Panc1 (cell line): ENCODE measurements at regions of chr1 and their contacts with region 1.

Region 1: GRCh38 chr1:224420106-224420505 is 14.5 kb downstream of the WDR26 start:
- DNase-seq: no peak
- ATAC-seq: no peak
- H3K4me3 ChIP-seq: no peak overlapping the region
- H3K27ac ChIP-seq: no peak overlapping the region
- H3K4me1 ChIP-seq: no peaks in the 10 kb centered on the region
- H3K27me3 ChIP-seq: no peaks in the 10 kb centered on the region
- CTCF ChIP-seq: no peak

Region 2: GRCh38 chr1:224259936-224260335 is 160.2 kb before region 1 on chr1:
- CTCF ChIA-PET with region 1: no interaction called
- POLR2A ChIA-PET with region 1: no interaction called
- in situ Hi-C with region 1: no loop called
- intact Hi-C with region 1: no loop called
- DNase-seq: no peak
- ATAC-seq: peak; percentile 84
- H3K4me3 ChIP-seq: no peak overlapping the region
- H3K27ac ChIP-seq: no peak overlapping the region
- H3K4me1 ChIP-seq: no peaks in the 10 kb centered on the region
- H3K27me3 ChIP-seq: no peaks in the 10 kb centered on the region
- CTCF ChIP-seq: no peak

Region 3: GRCh38 chr1:224348137-224348536 is 72.0 kb before region 1 on chr1:
- CTCF ChIA-PET with region 1: no interaction called
- POLR2A ChIA-PET with region 1: interaction called, 10 read pairs
- in situ Hi-C with region 1: no loop called
- intact Hi-C with region 1: no loop called
- DNase-seq: no peak
- ATAC-seq: no peak
- H3K4me3 ChIP-seq: no peak overlapping the region
- H3K27ac ChIP-seq: no peak overlapping the region
- H3K4me1 ChIP-seq: no peaks in the 10 kb centered on the region
- H3K27me3 ChIP-seq: no peaks in the 10 kb centered on the region
- CTCF ChIP-seq: no peak

Region 4: DNA sequence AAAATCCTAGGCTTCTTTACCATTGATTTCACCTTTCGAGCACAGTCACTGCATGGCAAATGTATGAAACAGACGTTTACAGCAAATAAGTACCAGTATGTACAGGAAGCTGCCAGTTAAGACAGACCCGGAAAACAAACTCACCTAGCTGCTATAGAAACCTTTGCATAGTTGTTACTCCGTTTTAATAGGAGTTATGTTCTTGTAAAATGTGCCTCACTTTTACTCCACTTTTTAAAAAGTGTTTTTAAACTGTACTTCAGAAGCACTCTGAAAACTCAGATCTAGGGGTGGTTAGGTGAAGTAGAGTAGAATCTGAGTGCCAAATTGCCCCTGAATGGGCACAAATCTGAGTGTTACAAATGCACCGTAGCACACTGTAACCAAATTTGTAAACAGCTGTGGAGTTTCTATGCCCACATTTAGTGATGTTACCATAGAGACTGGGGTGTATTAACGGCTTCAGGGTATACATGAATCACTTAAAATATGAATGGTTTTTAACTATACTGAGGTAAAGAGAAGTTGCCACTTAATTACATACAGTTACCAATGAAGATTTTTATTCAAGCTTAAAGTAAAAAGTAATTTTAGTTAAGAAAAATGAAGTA is 32.7 kb before region 1 on chr1:
- CTCF ChIA-PET with region 1: no interaction called
- POLR2A ChIA-PET with region 1: no interaction called
- in situ Hi-C with region 1: no loop called
- intact Hi-C with region 1: no loop called
- DNase-seq: no peak
- ATAC-seq: no peak
- H3K4me3 ChIP-seq: no peak overlapping the region
- H3K27ac ChIP-seq: no peak overlapping the region
- H3K4me1 ChIP-seq: no peaks in the 10 kb centered on the region
- H3K27me3 ChIP-seq: no peaks in the 10 kb centered on the region
- CTCF ChIP-seq: no peak